ENCODE measurements at regions of chr17 and their contacts with region 1.

Region 1: GRCh38 chr17:1606352-1607033 is 22.1 kb downstream of the SLC43A2 start:
- DNase-seq: no peak
- ATAC-seq: no peak
- H3K4me3 Mint-ChIP-seq: peak overlapping the region; percentile 67
- H3K27ac Mint-ChIP-seq: peak overlapping the region; percentile 86
- H3K4me1 Mint-ChIP-seq: peaks cover 36% of the 10 kb centered on the region
- H3K27me3 Mint-ChIP-seq: no peaks in the 10 kb centered on the region
- CTCF ChIP-seq: no peak

Region 2: GRCh38 chr17:1561400-1562175 is 44.9 kb before region 1 on chr17:
- CTCF ChIA-PET with region 1: no interaction called
- POLR2A ChIA-PET with region 1: interaction called, 12 read pairs
- intact Hi-C with region 1: no loop called
- DNase-seq: peak; percentile 54
- ATAC-seq: peak; percentile 26
- H3K4me3 Mint-ChIP-seq: peak overlapping the region; percentile 86
- H3K27ac Mint-ChIP-seq: peak overlapping the region; percentile 71
- H3K4me1 Mint-ChIP-seq: peaks cover 52% of the 10 kb centered on the region
- H3K27me3 Mint-ChIP-seq: no peaks in the 10 kb centered on the region
- CTCF ChIP-seq: no peak

Region 3: GRCh38 chr17:1566545-1567199 is 39.8 kb before region 1 on chr17:
- CTCF ChIA-PET with region 1: no interaction called
- POLR2A ChIA-PET with region 1: interaction called, 13 read pairs
- intact Hi-C with region 1: no loop called
- DNase-seq: no peak
- ATAC-seq: peak; percentile 50
- H3K4me3 Mint-ChIP-seq: peak overlapping the region; percentile 75
- H3K27ac Mint-ChIP-seq: peak overlapping the region; percentile 84
- H3K4me1 Mint-ChIP-seq: peaks cover 26% of the 10 kb centered on the region
- H3K27me3 Mint-ChIP-seq: no peaks in the 10 kb centered on the region
- CTCF ChIP-seq: no peak

Measured in activated B cell treated with CpG ODN at 0.5 μM for 24 hours (primary cell).